IMR-90 (cell line): ENCODE measurements at regions of chr7 and their contacts with region 1.

Region 1: GRCh38 chr7:55280031-55280454 is 85.1 kb upstream of the LANCL2 start:
- DNase-seq: peak; percentile 67
- ATAC-seq: peak; percentile 98
- H3K4me3 ChIP-seq: no peak overlapping the region
- H3K27ac ChIP-seq: no peak overlapping the region
- H3K4me1 ChIP-seq: no peaks in the 10 kb centered on the region
- H3K27me3 ChIP-seq: peaks cover 25% of the 10 kb centered on the region
- CTCF ChIP-seq: peak; percentile 93
- POLR2A ChIP-seq: no peak
- RAD21 ChIP-seq: peak; percentile 96

Region 2: DNA sequence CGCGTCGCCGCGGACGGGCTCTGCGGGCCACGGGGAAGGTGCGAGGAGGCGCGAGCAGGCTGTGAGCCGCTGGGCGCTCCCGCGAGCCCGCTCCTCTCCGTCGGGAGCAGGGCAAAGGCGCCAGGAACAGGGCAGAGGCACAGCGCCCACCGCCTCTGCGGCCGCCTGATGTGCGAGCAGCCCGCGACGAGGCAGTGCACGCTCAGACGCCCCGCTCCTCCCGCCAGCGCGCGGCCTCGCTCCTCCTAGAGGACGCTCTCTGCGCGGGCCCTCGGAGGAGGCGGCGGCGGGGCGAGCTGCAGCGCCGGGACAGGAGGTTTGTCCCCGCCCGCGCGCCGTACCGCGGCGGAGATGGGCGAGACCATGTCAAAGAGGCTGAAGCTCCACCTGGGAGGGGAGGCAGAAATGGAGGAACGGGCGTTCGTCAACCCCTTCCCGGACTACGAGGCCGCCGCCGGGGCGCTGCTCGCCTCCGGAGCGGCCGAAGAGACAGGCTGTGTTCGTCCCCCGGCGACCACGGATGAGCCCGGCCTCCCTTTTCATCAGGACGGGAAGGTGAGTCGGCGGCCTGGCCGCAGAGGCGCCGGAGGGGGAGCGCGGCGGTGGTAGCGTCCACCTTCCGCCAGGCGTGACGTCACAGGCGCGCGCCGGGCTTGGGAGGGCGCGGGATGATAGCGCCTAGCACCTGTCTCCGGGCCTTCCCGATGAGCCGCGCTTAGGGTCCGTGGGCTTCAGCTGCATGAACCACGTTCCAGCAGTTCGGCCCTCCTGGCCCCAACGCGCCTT is 85.8 kb after region 1 on chr7:
- CTCF ChIA-PET with region 1: no interaction called
- POLR2A ChIA-PET with region 1: no interaction called
- dilution Hi-C with region 1: no loop called
- in situ Hi-C with region 1: no loop called
- intact Hi-C with region 1: loop called (anchors 1 kb)
- DNase-seq: peak; percentile 96
- ATAC-seq: peak; percentile 93
- H3K4me3 ChIP-seq: peak overlapping the region; percentile 91
- H3K27ac ChIP-seq: peak overlapping the region; percentile 96
- H3K4me1 ChIP-seq: peaks cover 7% of the 10 kb centered on the region
- H3K27me3 ChIP-seq: no peaks in the 10 kb centered on the region
- CTCF ChIP-seq: peak; percentile 32
- POLR2A ChIP-seq: peak; percentile 88
- RAD21 ChIP-seq: peak; percentile 7; the same call in 1 of the 2 replicates

Region 3: DNA sequence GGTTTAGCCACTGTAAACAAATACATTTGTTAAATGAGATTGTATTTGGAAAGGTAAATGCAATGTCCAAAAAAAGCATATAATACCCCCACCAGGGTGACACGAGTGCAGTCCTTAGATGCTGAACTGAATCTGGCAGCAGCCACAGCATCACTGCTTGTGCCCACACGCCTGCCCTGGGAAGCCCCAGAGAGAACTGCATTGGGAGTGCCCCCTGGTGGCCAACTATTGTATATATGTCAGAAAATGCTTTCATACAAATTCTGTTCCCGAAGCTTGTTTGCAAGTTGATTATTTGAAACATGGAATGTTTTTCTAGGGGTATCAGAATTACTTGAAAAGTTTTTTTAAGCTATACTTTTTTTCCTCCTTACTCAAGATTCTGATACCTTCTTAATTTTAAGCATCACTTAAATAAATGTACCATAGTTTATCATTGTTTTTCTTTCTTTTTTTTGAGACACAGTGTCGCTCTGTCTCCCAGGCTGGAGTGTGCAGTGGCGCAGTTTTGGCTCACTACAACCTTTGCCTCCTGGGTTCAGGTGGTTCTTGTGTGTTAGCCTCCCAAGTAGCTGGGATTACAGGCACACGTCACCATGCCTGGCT is 135.2 kb after region 1 on chr7:
- CTCF ChIA-PET with region 1: interaction called, 11 read pairs
- POLR2A ChIA-PET with region 1: no interaction called
- dilution Hi-C with region 1: no loop called
- in situ Hi-C with region 1: loop called (anchors 5 kb)
- intact Hi-C with region 1: loop called (anchors 1 kb)
- DNase-seq: peak; percentile 65
- ATAC-seq: peak; percentile 98
- H3K4me3 ChIP-seq: no peak overlapping the region
- H3K27ac ChIP-seq: no peak overlapping the region
- H3K4me1 ChIP-seq: no peaks in the 10 kb centered on the region
- H3K27me3 ChIP-seq: no peaks in the 10 kb centered on the region
- CTCF ChIP-seq: peak; percentile 80
- POLR2A ChIP-seq: no peak
- RAD21 ChIP-seq: peak; percentile 76

Region 4: GRCh38 chr7:55951637-55952351 is 671.8 kb after region 1 on chr7 and contains the start of gene MRPS17:
- CTCF ChIA-PET with region 1: no interaction called
- POLR2A ChIA-PET with region 1: no interaction called
- dilution Hi-C with region 1: no loop called
- in situ Hi-C with region 1: loop called (anchors 25 kb)
- intact Hi-C with region 1: no loop called
- DNase-seq: peak; percentile 79
- ATAC-seq: peak; percentile 100
- H3K4me3 ChIP-seq: peak within 1 kb of the TSS; percentile 70
- H3K27ac ChIP-seq: peak within 1 kb of the TSS; percentile 10
- H3K4me1 ChIP-seq: no peaks in the 10 kb centered on the region
- H3K27me3 ChIP-seq: no peaks in the 10 kb centered on the region
- CTCF ChIP-seq: no peak
- POLR2A ChIP-seq: peak; percentile 56
- RAD21 ChIP-seq: no peak
- total RNA-seq, gene MRPS17: 15.2 and 21.1 TPM in 2 replicates

Region 5: DNA sequence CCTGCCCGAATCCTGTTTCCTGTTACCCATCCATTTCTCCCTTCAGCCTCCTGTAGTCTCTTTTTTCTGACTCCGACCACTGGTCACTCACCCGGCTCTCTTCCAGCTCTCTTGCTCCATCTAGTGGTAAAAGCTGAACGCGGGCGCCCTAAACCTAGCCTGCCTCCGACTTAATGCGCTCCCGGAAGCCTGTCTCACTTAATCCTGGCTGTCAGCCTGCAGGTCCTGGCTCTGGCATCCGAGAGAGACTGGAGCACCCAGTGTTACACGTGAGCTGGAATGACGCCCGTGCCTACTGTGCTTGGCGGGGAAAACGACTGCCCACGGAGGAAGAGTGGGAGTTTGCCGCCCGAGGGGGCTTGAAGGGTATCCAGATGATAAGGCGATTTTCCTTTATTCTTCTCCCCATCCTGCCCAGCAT is 794.3 kb after region 1 on chr7:
- CTCF ChIA-PET with region 1: no interaction called
- POLR2A ChIA-PET with region 1: no interaction called
- dilution Hi-C with region 1: no loop called
- in situ Hi-C with region 1: loop called (anchors 25 kb)
- intact Hi-C with region 1: loop called (anchors 5 kb)
- DNase-seq: peak; percentile 72
- ATAC-seq: peak; percentile 95
- H3K4me3 ChIP-seq: no peak overlapping the region
- H3K27ac ChIP-seq: no peak overlapping the region
- H3K4me1 ChIP-seq: peaks cover 8% of the 10 kb centered on the region; the same call in 1 of the 2 replicates
- H3K27me3 ChIP-seq: no peaks in the 10 kb centered on the region
- CTCF ChIP-seq: peak; percentile 96
- POLR2A ChIP-seq: 0 out of 2 replicates have a peak, but pooled peaks have one; percentile 31
- RAD21 ChIP-seq: peak; percentile 95